Activated T-helper 1 cell treated with anti-CD3 and anti-CD28 coated beads, Interleukin-12 subunit alpha, Interleukin-12 subunit beta, Interleukin-2, Interleukin-4 antibody, amounts not matched to agents 30 ng/mL and 10 ng/mL and 1 ng/mL, durations not matched to agents 14 hours and 24 hours and 36 hours (primary cell): ENCODE measurements at regions of chr19 and their contacts with region 1.

Region 1: GRCh38 chr19:49676690-49677231 is 310 bp upstream of the PRMT1 start:
- DNase-seq: peak; percentile 98
- H3K4me3 Mint-ChIP-seq: peak overlapping the region; percentile 95
- H3K27ac Mint-ChIP-seq: peak overlapping the region; percentile 99
- H3K4me1 Mint-ChIP-seq: peaks cover 41% of the 10 kb centered on the region
- H3K27me3 Mint-ChIP-seq: no peaks in the 10 kb centered on the region

Region 2: DNA sequence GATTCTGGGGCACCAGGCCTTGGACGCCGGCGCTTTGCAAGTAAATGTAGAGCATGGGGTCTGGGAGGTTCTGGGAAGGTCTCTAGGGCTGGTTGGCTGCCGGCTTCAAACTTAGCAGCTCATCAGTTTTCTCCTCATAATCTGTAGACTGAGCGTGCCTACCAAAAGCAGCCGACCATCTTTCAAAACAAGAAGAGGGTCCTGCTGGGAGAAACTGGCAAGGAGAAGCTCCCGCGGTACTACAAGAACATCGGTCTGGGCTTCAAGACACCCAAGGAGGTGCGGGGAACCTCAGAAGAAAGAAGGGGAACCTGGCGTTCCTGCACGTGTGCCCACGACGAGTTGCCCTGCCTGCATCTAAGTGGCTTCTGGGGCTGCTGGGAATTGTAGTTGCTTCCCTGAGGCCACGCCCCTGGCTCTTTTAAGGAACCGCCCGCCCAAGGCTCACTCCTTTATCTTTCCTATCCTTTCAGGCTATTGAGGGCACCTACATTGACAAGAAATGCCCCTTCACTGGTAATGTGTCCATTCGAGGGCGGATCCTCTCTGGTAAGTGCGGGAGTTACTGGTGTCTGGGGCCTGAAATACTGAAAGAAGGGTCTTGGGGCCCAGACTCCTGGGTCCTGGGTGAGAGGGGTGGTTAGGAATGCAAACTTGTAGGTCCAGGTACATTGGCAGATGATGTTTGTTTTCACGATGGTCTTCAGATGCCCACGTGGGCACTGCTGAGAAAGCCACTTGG is 179.5 kb before region 1 on chr19:
- intact Hi-C with region 1: loop called (anchors 1 kb)
- DNase-seq: peak; percentile 65
- H3K4me3 Mint-ChIP-seq: peak overlapping the region; percentile 91
- H3K27ac Mint-ChIP-seq: peak overlapping the region; percentile 94
- H3K4me1 Mint-ChIP-seq: peaks cover 64% of the 10 kb centered on the region
- H3K27me3 Mint-ChIP-seq: no peaks in the 10 kb centered on the region

Region 3: GRCh38 chr19:49533551-49534488 is 142.9 kb before region 1 on chr19:
- intact Hi-C with region 1: no loop called
- DNase-seq: peak; percentile 79
- H3K4me3 Mint-ChIP-seq: peak overlapping the region; percentile 86
- H3K27ac Mint-ChIP-seq: peak overlapping the region; percentile 85
- H3K4me1 Mint-ChIP-seq: peaks cover 21% of the 10 kb centered on the region
- H3K27me3 Mint-ChIP-seq: peaks cover 9% of the 10 kb centered on the region

Region 4: DNA sequence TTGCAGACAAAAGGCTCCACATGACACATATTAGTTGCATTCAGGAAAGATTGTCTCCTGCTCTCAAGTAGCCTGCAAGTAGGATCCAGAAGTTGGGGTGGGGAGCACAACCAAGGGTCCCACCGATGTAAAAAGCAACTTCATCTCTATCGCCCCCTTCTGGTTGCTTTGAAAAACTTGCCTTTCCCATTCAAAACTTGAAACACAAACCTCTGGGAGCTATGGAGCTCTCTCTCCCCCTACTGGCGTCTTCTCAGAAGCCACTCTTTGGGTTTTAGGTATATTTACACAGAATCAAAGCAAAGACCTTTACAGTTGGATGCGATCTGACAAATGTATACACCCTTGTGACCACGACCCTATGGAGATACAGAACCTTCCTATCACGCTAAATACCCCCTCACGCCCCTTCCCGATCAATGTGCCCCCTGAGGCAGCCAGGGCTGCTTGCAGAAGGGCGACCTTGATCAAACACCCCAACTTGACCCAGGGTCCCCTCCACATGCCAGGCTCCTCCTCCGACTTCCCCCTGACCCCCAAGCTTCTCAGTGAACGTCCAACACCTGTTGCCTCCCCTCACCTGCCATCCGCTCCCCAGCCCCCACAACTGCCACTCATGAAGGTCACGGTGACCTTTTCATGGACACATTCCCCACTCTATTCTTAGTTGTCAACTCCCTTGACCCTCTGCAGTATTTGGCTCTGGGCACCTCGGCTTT is 106.5 kb before region 1 on chr19:
- intact Hi-C with region 1: loop called (anchors 1 kb)
- DNase-seq: peak; percentile 69
- H3K4me3 Mint-ChIP-seq: peak overlapping the region; percentile 66
- H3K27ac Mint-ChIP-seq: peak overlapping the region; percentile 80
- H3K4me1 Mint-ChIP-seq: peaks cover 46% of the 10 kb centered on the region
- H3K27me3 Mint-ChIP-seq: no peaks in the 10 kb centered on the region

Region 5: GRCh38 chr19:49590071-49590970 is 86.4 kb before region 1 on chr19:
- intact Hi-C with region 1: loop called (anchors 1 kb)
- DNase-seq: peak; percentile 93
- H3K4me3 Mint-ChIP-seq: peak overlapping the region; percentile 88
- H3K27ac Mint-ChIP-seq: peak overlapping the region; percentile 84
- H3K4me1 Mint-ChIP-seq: peaks cover 40% of the 10 kb centered on the region
- H3K27me3 Mint-ChIP-seq: peaks cover 10% of the 10 kb centered on the region

Region 6: DNA sequence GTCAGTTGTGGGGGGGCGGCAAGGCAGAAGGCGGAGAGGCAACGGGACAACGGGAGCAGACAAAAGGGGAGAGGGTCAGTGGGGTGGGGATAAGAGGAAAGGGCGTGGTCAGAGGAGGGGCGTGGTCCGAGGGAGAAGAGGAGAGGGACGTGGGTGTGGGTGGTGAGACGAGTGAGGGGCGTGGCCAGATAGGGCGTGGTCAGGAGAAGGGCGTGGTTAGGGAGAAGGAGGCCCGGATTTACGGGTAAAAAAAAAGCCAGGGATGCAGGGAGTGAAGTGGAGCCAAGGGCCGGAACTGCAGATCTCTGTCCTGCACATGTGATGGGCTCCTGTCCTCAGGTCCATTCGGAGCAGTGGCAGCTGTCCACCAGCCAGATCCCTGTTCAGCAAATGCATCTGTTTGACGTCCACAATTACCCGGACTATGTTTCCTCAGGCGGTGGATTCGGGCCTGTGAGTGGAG is 35.7 kb after region 1 on chr19:
- intact Hi-C with region 1: no loop called
- DNase-seq: no peak
- H3K4me3 Mint-ChIP-seq: no peak overlapping the region
- H3K27ac Mint-ChIP-seq: no peak overlapping the region
- H3K4me1 Mint-ChIP-seq: peaks cover 3% of the 10 kb centered on the region
- H3K27me3 Mint-ChIP-seq: no peaks in the 10 kb centered on the region

Region 7: DNA sequence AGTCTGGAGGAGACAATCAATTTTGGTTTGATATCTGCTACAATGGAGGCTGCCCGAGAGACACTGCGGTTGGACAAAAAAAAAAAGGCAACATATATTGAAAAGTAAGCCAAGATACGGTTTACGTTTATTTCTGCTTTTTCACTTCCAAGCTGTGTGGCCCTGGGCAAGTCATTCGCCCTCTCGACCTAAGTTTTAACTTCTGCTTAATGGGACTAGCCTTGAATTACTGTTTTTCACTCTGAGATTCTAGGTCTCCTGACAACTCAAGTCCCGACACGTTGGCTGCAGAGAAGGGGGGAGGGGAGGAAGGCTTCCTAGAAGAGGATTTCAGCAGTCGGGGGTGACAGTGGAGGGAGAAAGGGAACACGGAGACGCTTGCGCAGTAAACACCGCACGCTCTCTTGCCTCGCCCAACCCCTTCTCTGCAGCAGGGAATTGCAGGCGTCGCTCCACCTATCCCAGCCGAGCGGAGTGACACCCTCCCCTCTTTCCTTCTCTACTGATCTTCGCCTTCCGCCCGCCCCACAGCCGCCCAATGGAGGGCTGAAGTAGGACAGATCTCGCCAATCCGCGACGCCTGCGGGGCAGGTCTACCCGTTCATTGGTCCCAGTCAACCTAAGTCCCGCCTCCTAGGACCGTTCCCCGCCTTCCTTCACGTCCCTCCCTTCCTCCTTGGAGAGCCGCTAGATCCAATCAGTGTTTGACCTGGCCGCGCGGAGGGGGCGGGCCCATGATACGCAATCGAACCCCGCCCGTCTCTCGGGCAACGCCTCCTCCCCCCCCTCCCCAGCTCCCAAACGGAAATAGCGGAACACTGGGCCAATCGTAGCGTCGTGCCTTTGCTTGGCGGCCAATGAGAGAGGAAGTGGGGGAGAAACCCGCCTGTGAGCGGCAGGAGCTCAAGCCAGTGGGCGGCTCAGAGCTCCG is 89.5 kb after region 1 on chr19:
- intact Hi-C with region 1: loop called (anchors 1 kb)
- DNase-seq: peak; percentile 99
- H3K4me3 Mint-ChIP-seq: peak overlapping the region; percentile 89
- H3K27ac Mint-ChIP-seq: peak overlapping the region; percentile 91
- H3K4me1 Mint-ChIP-seq: peaks cover 24% of the 10 kb centered on the region
- H3K27me3 Mint-ChIP-seq: no peaks in the 10 kb centered on the region

Region 8: DNA sequence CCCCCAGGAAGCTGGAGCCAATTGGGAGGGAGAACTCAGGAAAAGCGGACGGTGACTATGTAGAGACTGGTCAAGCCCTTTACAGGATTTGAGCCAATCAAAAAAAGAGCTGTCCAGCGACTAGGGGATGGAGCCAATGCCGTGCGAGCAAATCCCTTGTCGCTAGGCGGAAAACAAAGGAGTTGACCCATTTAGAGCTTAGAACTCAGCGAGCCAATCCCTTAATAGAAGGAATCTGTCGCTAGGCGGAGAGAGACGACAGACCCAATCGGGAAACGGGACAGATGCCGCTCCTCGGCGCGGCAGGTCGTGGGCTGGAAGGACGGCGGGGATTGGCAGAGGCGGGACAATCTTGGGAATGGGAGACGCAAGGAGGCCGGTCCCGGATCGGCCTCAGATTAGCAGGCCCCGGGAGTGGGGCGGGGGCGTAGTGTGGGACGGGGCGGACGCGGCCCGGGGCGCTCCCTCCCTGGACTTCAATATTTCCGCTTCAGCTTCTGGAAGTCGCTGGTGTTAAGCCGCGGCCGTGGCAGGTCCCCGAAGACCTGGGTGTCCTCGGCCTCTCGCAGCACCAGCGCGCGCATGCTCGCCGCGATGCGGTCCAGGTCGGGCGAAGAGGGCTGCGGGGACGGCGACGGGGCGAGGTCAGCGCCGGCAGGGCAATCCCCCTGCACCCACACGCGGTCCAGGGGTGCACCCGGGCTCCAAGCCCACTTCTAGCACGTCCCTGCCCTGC is 192.8 kb after region 1 on chr19:
- intact Hi-C with region 1: loop called (anchors 2 kb)
- DNase-seq: peak; percentile 92
- H3K4me3 Mint-ChIP-seq: no peak overlapping the region
- H3K27ac Mint-ChIP-seq: no peak overlapping the region
- H3K4me1 Mint-ChIP-seq: peaks cover 36% of the 10 kb centered on the region
- H3K27me3 Mint-ChIP-seq: no peaks in the 10 kb centered on the region